Posterior cingulate gyrus (tissue), 11 donors: ENCODE measurements at regions of chr2 and their contacts with region 1.

Region 1: GRCh38 chr2:219107758-219108157 is 47.0 kb upstream of the IHH start:
- DNase-seq: no peak

Region 2: DNA sequence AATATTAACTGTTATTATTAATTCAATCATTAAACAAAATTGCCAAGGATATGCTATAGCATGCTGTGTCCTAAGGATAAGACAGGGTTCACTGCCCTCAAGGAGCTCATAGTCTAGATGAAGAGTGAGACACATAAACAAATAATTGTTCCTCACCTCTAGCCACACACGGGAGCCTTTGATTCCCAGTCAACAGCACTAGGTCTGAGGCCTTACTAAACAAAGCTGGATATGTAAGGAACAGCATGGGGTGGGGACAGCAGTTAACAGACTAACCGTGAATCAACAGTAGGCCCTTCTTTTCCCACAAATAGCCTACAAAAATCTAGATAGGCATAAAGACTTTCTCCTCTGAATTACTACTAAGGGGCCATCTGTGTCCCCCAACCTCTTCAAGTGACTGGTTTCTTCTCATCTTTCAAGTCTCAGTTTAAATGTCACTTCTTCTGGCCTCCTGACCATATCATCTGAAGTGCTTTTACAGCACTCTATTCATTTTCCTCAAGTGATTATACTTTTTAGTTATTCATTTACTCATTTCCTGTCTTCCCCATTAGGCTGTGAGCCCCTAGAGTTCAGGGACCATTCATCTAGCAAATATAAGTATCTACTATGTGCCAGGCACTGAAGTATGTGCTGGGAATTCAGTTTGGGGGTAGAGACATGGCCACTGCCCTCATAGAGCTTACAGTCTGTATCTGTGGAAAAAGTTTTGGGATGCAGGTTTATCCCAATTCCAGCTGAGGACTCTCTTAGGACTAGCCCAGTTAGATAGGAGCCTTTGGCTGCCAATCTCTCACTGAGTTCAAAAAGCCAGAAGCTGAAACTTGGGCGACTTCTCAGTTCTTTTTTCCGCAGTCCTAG is 17.1 kb before region 1 on chr2:
- intact Hi-C with region 1: loop called (anchors 2 kb)
- DNase-seq: no peak